Activated T-helper 1 cell treated with anti-CD3 and anti-CD28 coated beads, Interleukin-12 subunit alpha, Interleukin-12 subunit beta, Interleukin-2, Interleukin-4 antibody, amounts not matched to agents 30 ng/mL and 10 ng/mL and 1 ng/mL, durations not matched to agents 14 hours and 24 hours and 36 hours (primary cell): ENCODE measurements at regions of chr12 and their contacts with region 1.

Region 1: GRCh38 chr12:119876761-119877638 is at the start of gene CIT:
- DNase-seq: peak; percentile 87
- H3K4me3 Mint-ChIP-seq: peak within 1 kb of the TSS; percentile 84
- H3K27ac Mint-ChIP-seq: peak within 1 kb of the TSS; percentile 67
- H3K4me1 Mint-ChIP-seq: peaks cover 25% of the 10 kb centered on the region
- H3K27me3 Mint-ChIP-seq: peaks cover 12% of the 10 kb centered on the region
- total RNA-seq, gene CIT: 36.6 and 40.3 TPM in 2 replicates

Region 2: DNA sequence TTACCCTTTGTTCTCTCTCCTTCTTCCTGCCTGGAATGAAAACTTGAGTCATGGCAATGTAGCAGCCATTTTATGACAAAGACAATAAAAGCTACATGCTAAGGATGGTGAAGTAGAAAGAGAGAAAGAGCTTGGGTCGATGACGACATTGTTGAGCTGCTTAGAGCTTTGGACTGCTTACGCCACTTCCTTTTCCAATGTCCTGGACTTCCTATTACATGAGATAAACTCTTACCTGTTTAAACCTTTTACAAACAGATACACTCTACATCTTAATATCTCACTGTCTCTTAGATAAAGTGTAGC is 1670.9 kb before region 1 on chr12:
- intact Hi-C with region 1: no loop called
- DNase-seq: no peak
- H3K4me3 Mint-ChIP-seq: no peak overlapping the region
- H3K27ac Mint-ChIP-seq: no peak overlapping the region
- H3K4me1 Mint-ChIP-seq: peaks cover 7% of the 10 kb centered on the region
- H3K27me3 Mint-ChIP-seq: no peaks in the 10 kb centered on the region

Region 3: GRCh38 chr12:119667577-119668323 is 209.2 kb before region 1 on chr12 and contains the start of gene PRKAB1:
- intact Hi-C with region 1: loop called (anchors 5 kb)
- DNase-seq: peak; percentile 96
- H3K4me3 Mint-ChIP-seq: peak within 1 kb of the TSS; percentile 95
- H3K27ac Mint-ChIP-seq: peak within 1 kb of the TSS; percentile 82
- H3K4me1 Mint-ChIP-seq: peaks cover 49% of the 10 kb centered on the region
- H3K27me3 Mint-ChIP-seq: no peaks in the 10 kb centered on the region
- total RNA-seq, gene PRKAB1: 30.3 and 33.7 TPM in 2 replicates

Region 4: GRCh38 chr12:119692997-119693396 is 184.0 kb before region 1 on chr12:
- intact Hi-C with region 1: no loop called
- DNase-seq: no peak
- H3K4me3 Mint-ChIP-seq: no peak overlapping the region
- H3K27ac Mint-ChIP-seq: no peak overlapping the region
- H3K4me1 Mint-ChIP-seq: no peaks in the 10 kb centered on the region
- H3K27me3 Mint-ChIP-seq: no peaks in the 10 kb centered on the region